Activated CD8-positive, alpha-beta memory T cell treated with anti-CD3 and anti-CD28 coated beads, Interleukin-2, amount 10 ng/mL, durations not matched to agents 7 days and 5 days (primary cell): ENCODE measurements at regions of chr22 and their contacts with region 1.

Region 1: GRCh38 chr22:37965940-37966664 is 12.6 kb downstream of the POLR2F start:
- DNase-seq: no peak
- ATAC-seq: no peak
- H3K4me3 Mint-ChIP-seq: no peak overlapping the region
- H3K27ac Mint-ChIP-seq: no peak overlapping the region
- H3K4me1 Mint-ChIP-seq: peaks cover 1% of the 10 kb centered on the region
- H3K27me3 Mint-ChIP-seq: no peaks in the 10 kb centered on the region

Region 2: GRCh38 chr22:37953437-37954179 is 12.5 kb before region 1 on chr22 and contains the starts of genes C22orf23 and POLR2F:
- CTCF ChIA-PET with region 1: interaction called, 23 read pairs
- DNase-seq: peak; percentile 97
- ATAC-seq: peak; percentile 97
- H3K4me3 Mint-ChIP-seq: peak within 1 kb of the TSS; percentile 90
- H3K27ac Mint-ChIP-seq: peak within 1 kb of the TSS; percentile 92
- H3K4me1 Mint-ChIP-seq: peaks cover 31% of the 10 kb centered on the region
- H3K27me3 Mint-ChIP-seq: peaks cover 8% of the 10 kb centered on the region
- total RNA-seq, gene C22orf23: 0.21 TPM in 1 of 2 experiments, not detected in the other
- total RNA-seq, gene POLR2F: 77.4 to 81.0 TPM